Endothelial cell of umbilical vein (primary cell): ENCODE measurements at regions of chr2 and their contacts with region 1.

Region 1: GRCh38 chr2:217510771-217511291 is 492.0 kb downstream of the TNS1 start:
- DNase-seq: peak; percentile 74
- H3K4me3 ChIP-seq: no peak overlapping the region
- H3K27ac ChIP-seq: no peak overlapping the region
- H3K4me1 ChIP-seq: no peaks in the 10 kb centered on the region
- H3K27me3 ChIP-seq: no peaks in the 10 kb centered on the region
- CTCF ChIP-seq: peak; percentile 64 to 65
- POLR2A ChIP-seq: no peak

Region 2: GRCh38 chr2:216666461-216667233 is 844.2 kb before region 1 on chr2:
- CTCF ChIA-PET with region 1: interaction called, 10 read pairs
- POLR2A ChIA-PET with region 1: no interaction called
- dilution Hi-C with region 1: no loop called
- intact Hi-C with region 1: no loop called
- DNase-seq: peak; percentile 74
- H3K4me3 ChIP-seq: no peak overlapping the region
- H3K27ac ChIP-seq: no peak overlapping the region
- H3K4me1 ChIP-seq: peaks cover 8% of the 10 kb centered on the region
- H3K27me3 ChIP-seq: peaks cover 0 to 4% of the 10 kb centered on the region in 2 experiments
- CTCF ChIP-seq: peak; percentile 97 to 98
- POLR2A ChIP-seq: no peak

Region 3: GRCh38 chr2:216687646-216688045 is 823.2 kb before region 1 on chr2:
- CTCF ChIA-PET with region 1: interaction called, 41 read pairs
- POLR2A ChIA-PET with region 1: interaction called, 3 read pairs
- dilution Hi-C with region 1: no loop called
- intact Hi-C with region 1: loop called (anchors 1 kb)
- DNase-seq: no peak
- H3K4me3 ChIP-seq: no peak overlapping the region
- H3K27ac ChIP-seq: no peak overlapping the region
- H3K4me1 ChIP-seq: peaks cover 10% of the 10 kb centered on the region
- H3K27me3 ChIP-seq: peaks cover 33 to 41% of the 10 kb centered on the region in 2 experiments
- CTCF ChIP-seq: peak; percentile 25 to 44
- POLR2A ChIP-seq: no peak

Region 4: DNA sequence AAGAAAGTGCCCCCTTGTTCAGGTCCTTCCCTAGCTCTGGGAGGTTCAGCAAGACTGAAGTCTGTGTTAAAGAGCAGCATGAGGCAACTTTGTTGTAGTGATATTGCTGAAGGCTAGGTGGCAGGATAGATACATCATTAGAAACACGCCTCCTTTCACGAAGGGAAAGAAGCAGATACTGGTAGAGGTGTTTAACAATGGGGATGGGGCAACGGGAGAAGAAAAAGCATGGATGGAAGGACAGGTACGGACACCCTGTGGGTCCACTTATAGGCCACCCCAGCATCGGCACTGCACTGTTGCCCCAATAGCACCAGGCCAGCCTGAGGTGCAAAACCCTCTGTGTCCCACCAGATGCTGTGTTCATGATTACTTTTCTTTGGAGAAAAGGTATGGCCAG is 811.9 kb before region 1 on chr2:
- CTCF ChIA-PET with region 1: interaction called, 31 read pairs
- POLR2A ChIA-PET with region 1: no interaction called
- dilution Hi-C with region 1: no loop called
- intact Hi-C with region 1: loop called (anchors 1 kb)
- DNase-seq: peak; percentile 59
- H3K4me3 ChIP-seq: no peak overlapping the region
- H3K27ac ChIP-seq: no peak overlapping the region
- H3K4me1 ChIP-seq: peaks cover 3% of the 10 kb centered on the region
- H3K27me3 ChIP-seq: peaks cover 52 to 58% of the 10 kb centered on the region in 2 experiments
- CTCF ChIP-seq: peak; percentile 52
- POLR2A ChIP-seq: no peak

Region 5: DNA sequence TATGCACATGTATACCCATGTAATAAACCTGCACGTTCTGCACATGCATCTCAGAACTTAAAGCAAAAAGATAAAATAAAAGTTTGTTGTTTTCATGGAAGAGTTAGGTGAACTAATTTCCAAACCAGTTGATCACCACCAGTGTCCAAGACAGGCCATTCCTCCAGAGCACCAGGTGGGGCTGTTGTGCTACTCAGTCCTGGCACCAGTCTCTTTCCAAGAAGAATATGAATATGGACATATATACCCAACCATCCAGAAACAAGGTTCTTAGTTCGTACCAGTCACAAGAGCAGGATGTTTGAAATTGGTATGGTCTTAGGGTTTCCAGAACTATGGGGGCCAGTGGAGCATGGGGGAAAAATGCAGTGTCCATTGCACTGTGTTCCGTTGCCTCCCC is 633.7 kb before region 1 on chr2:
- CTCF ChIA-PET with region 1: no interaction called
- POLR2A ChIA-PET with region 1: no interaction called
- dilution Hi-C with region 1: no loop called
- intact Hi-C with region 1: loop called (anchors 1 kb)
- DNase-seq: peak; percentile 4
- H3K4me3 ChIP-seq: no peak overlapping the region
- H3K27ac ChIP-seq: no peak overlapping the region
- H3K4me1 ChIP-seq: no peaks in the 10 kb centered on the region
- H3K27me3 ChIP-seq: no peaks in the 10 kb centered on the region
- CTCF ChIP-seq: peak; percentile 4 to 21
- POLR2A ChIP-seq: no peak

Region 6: DNA sequence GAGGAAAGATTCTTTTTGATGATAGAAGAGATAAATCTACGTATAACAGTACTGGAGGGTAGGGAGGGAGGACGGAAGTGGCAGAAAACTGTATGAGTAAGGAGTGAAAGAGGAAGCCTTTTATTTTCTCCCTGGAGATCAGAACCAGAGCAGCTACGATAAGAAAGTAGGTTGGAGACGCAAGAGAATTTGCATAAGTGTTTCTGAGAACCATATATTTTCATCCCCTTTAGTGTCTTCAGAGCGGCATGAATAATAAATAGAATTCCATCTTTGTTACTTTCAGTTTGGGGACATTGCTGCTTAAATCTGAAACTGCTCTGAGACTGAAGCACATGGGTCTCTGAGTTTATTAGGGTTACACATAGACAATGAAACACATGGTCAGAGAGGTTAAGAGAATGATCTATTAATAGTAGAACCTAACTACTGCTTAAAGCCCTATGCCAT is 420.8 kb before region 1 on chr2:
- CTCF ChIA-PET with region 1: no interaction called
- POLR2A ChIA-PET with region 1: no interaction called
- dilution Hi-C with region 1: no loop called
- intact Hi-C with region 1: no loop called
- DNase-seq: peak; percentile 24
- H3K4me3 ChIP-seq: no peak overlapping the region
- H3K27ac ChIP-seq: no peak overlapping the region
- H3K4me1 ChIP-seq: peaks cover 6% of the 10 kb centered on the region
- H3K27me3 ChIP-seq: no peaks in the 10 kb centered on the region
- CTCF ChIP-seq: no peak
- POLR2A ChIP-seq: no peak

Region 7: DNA sequence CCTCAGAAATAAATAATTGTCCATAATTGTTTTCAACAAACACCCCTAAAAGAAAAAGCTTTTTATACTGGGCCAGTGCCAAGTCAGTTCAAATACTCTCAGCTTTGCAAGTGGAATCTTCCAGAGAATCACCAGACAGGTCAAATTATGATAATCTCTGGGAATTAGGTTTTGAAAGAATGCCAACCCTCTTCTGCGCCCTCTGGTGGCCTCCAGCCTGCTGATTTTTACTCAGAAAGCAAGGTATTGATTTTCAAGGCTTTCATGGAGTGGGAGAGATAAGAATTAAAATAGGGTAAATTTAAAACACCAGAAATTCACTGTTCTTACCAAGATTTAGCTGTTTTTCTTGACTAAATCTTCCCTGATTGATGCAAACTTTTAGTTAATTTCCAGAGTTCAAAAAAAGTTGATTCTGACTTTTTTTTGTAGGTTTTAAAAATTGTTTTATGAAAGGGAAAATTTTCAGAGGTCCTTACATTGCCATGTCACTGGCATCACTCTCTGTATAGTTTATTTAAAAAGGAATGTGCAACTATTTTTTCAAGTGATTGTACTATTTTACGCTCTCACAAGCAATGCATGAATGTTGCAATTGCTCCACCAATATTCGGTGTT is 368.1 kb before region 1 on chr2:
- CTCF ChIA-PET with region 1: interaction called, 4 read pairs
- POLR2A ChIA-PET with region 1: no interaction called
- dilution Hi-C with region 1: no loop called
- intact Hi-C with region 1: loop called (anchors 1 kb)
- DNase-seq: peak; percentile 46
- H3K4me3 ChIP-seq: no peak overlapping the region
- H3K27ac ChIP-seq: no peak overlapping the region
- H3K4me1 ChIP-seq: no peaks in the 10 kb centered on the region
- H3K27me3 ChIP-seq: peaks cover 3 to 7% of the 10 kb centered on the region in 2 experiments
- CTCF ChIP-seq: peak; percentile 66 to 73
- POLR2A ChIP-seq: no peak